ENCODE measurements at regions of chr17 and their contacts with region 1.

Region 1: DNA sequence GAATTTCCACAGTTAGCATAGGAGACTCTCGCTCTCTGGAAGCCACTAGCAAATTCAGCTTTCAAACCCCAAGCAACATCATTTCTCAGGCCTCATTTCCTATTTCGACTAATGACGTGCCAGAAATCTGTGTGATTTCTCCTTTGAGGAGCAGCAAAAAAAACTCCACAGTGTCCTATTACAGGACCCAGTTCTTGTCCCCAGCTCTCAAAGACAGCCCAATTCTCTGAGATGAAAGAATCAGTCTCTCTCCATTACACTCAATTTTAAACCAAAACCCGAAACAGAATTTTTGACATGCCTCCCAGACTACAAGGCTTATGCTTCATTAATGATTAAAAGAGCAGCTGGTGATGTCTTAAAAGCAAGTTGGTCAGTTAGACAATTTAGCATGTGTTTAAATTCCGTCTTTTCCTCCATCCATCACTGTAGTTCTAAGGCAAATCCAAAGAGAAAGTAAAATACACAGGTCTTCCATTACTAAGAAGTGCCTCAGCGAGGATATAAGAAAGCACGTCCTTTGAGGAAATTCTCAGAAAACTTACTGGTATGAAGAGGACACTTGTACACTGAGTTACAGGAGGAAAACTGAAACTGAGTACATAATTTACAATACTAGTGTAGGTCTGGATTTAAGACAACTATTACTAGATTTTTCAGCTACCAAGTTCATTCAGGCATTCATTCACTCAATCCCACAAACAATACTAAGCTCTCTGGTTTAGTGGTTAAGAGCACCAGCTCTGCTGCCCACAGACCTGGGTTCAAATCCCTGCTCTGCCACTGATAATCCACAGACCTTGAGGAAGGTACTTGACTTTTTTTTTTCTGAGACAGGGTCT is 12.5 kb downstream of the TOM1L2 start:
- DNase-seq: no peak
- ATAC-seq: peak in 1 of 4 donors; percentile 41
- H3K4me3 ChIP-seq: peak overlapping the region in 8 of 12 donors; percentile 4 to 41 (median 26)
- H3K27ac ChIP-seq: peak overlapping the region in 11 of 12 donors; percentile 13 to 92 (median 70)
- H3K4me1 ChIP-seq: peaks cover 4 to 66% (median 52%) of the 10 kb centered on the region in 12 donors
- H3K27me3 ChIP-seq: no peaks in the 10 kb centered on the region
- CTCF ChIP-seq: no peak
- POLR2A ChIP-seq: no peak

Region 2: DNA sequence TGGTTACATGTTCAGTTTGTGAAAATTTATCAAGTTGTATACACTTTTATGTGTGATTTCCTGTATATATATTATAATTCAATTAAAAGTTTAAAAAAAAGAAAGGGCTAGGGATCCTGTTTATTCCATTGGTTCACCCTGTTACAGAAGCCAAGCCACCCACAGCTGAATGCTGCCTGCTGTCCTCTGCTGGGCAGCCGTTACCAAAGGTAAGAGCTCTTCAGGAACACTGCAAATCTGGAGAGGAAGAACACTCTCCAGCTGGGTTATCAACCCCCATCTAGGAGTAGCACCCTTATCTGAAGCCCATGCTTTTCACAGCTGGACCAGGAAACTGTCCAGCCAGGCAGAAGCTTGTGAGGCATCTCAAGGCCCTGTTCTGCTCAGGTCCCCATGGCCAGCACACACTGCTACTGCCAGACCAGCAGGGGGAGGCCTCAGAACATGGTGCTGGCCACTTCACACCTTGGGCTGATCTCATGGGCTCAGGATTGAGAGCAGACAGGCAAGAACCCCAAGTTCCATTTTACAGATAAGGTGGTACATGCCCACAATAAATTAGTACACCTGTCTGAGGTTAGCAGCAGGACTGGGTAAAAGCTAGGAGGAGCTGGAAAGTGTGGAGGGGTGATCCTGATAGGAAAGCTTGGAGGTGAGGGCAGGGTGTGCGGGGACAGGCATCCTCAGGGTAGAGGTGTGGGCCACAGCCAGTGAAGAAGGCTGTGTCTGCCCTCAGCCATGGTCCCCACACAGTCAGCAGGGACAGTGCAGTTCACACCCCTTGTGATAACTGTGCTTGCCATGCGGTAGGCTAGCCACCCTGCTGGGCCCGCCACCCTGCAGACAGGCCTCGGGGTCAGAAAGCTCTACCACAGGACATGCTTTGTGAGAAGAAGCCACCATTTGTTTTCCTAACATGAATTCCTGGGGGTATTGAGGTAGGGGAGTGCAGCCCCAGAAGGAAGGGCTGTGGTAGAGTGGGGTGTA is 68.7 kb before region 1 on chr17:
- intact Hi-C with region 1: loop called in 1 of 10 experiments (anchors 10 kb)
- DNase-seq: peak in 3 of 5 donors; percentile 49 to 64 (median 58)
- ATAC-seq: peak; percentile 58 to 74 (median 65)
- H3K4me3 ChIP-seq: no peak overlapping the region
- H3K27ac ChIP-seq: no peak overlapping the region
- H3K4me1 ChIP-seq: peaks cover 4 to 41% (median 21%) of the 10 kb centered on the region in 12 donors
- H3K27me3 ChIP-seq: no peaks in the 10 kb centered on the region
- CTCF ChIP-seq: peak; percentile 43 to 78 (median 62)
- POLR2A ChIP-seq: no peak

Region 3: DNA sequence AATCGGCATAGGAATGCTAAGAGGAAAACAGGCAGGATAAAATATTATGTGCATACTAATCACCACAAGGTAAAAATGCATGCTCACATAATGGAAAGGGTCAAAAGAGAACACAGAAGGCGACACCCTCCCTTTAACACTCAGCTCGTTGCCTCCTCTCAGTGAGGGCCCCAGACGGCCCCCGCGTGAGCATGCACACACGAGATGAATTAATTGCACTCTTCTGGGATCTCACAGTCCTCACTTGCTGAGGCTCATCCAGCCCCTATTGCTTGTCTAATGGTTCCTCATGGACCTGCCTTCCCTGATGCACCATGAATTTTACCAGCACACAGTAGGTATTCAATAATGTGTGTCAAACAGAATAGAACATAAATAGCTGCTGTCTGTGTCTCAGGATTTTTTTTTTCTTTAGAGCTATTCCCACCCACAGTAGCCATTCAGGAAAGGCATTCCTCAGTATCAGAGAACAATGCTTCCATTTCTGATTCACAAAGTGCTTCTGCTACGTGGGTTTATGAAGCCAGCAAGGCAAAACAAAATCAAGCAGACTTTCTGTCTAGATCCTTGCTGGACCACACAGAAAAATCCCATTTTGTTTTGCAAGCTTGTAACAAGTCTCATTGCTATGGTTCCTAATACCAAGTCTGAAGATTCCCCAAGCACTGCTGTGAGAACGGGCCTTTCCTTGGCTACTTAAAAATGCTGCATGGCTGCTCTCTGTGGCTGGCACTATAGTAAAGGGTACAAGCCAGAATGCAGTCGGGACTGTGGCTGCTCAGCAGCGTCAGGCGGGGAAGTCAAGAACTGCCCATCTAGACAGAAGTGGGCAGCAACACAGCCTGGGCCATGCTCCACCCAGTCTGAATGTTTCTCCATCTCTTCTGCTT is 31.1 kb before region 1 on chr17:
- intact Hi-C with region 1: loop called in 1 of 10 experiments (anchors 5 kb)
- DNase-seq: no peak
- ATAC-seq: peak; percentile 32 to 79 (median 50)
- H3K4me3 ChIP-seq: no peak overlapping the region
- H3K27ac ChIP-seq: peak overlapping the region in 11 of 12 donors; percentile 41 to 82 (median 69)
- H3K4me1 ChIP-seq: peaks cover 3 to 88% (median 42%) of the 10 kb centered on the region in 12 donors
- H3K27me3 ChIP-seq: no peaks in the 10 kb centered on the region
- CTCF ChIP-seq: no peak
- POLR2A ChIP-seq: no peak